HepG2 (cell line): ENCODE measurements at regions of chr16 and their contacts with region 1.

Region 1: GRCh38 chr16:14070877-14071575 is at the start of gene MRTFB:
- DNase-seq: peak; percentile 80
- ATAC-seq: peak; percentile 83
- H3K4me3 ChIP-seq: peak within 1 kb of the TSS; percentile 85 to 97 (median 93)
- H3K27ac ChIP-seq: peak within 1 kb of the TSS; percentile 71
- H3K4me1 ChIP-seq: peaks cover 44% of the 10 kb centered on the region
- H3K27me3 ChIP-seq: no peaks in the 10 kb centered on the region; a peak in 2 of 5 replicates
- CTCF ChIP-seq: 0 out of 2 replicates have a peak, but pooled peaks have one; percentile 30
- EP300 ChIP-seq: peak in 1 of 2 experiments; percentile 38; a peak in 2 of 4 replicates
- POLR2A ChIP-seq: peak; percentile 57 to 86; a peak in 2 of 4 replicates
- RAD21 ChIP-seq: no peak; the same call in 1 of the 2 replicates
- total RNA-seq, gene MRTFB: 11.4 and 17.3 TPM in 2 replicates

Region 2: DNA sequence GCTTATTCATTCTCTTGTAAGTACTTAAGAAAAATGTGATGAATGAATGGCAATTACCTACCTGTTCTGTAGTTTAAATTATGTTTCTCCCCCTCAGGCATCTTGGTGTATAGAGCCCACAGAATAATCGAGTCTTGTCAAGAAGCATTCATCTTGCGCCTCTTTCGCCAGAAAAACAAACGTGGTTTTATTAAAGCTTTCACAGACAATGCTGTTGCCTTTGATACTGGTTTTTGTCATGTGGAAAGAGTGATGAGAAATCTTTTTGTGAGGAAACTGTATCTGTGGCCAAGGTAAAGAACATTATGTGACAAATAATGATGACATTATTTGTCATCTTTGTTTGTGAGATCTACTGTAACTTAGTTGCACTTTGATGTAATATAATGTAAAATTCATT is 144.6 kb before region 1 on chr16:
- CTCF ChIA-PET with region 1: no interaction called
- POLR2A ChIA-PET with region 1: no interaction called
- in situ Hi-C with region 1: no loop called
- intact Hi-C with region 1: loop called (anchors 5 kb)
- DNase-seq: no peak
- ATAC-seq: no peak
- H3K4me3 ChIP-seq: no peak overlapping the region
- H3K27ac ChIP-seq: no peak overlapping the region
- H3K4me1 ChIP-seq: peaks cover 2% of the 10 kb centered on the region
- H3K27me3 ChIP-seq: no peaks in the 10 kb centered on the region
- CTCF ChIP-seq: no peak
- EP300 ChIP-seq: no peak
- POLR2A ChIP-seq: no peak
- RAD21 ChIP-seq: no peak

Region 3: GRCh38 chr16:14036561-14037288 is 34.3 kb before region 1 on chr16:
- CTCF ChIA-PET with region 1: no interaction called
- POLR2A ChIA-PET with region 1: no interaction called
- in situ Hi-C with region 1: no loop called
- intact Hi-C with region 1: no loop called
- DNase-seq: no peak
- ATAC-seq: no peak
- H3K4me3 ChIP-seq: no peak overlapping the region
- H3K27ac ChIP-seq: no peak overlapping the region
- H3K4me1 ChIP-seq: no peaks in the 10 kb centered on the region
- H3K27me3 ChIP-seq: no peaks in the 10 kb centered on the region
- CTCF ChIP-seq: no peak
- EP300 ChIP-seq: no peak
- POLR2A ChIP-seq: no peak
- RAD21 ChIP-seq: no peak

Region 4: GRCh38 chr16:14202697-14203096 is 131.7 kb after region 1 on chr16:
- CTCF ChIA-PET with region 1: no interaction called
- POLR2A ChIA-PET with region 1: no interaction called
- in situ Hi-C with region 1: no loop called
- intact Hi-C with region 1: loop called (anchors 10 kb)
- DNase-seq: peak; percentile 54
- ATAC-seq: peak; percentile 82
- H3K4me3 ChIP-seq: no peak overlapping the region
- H3K27ac ChIP-seq: peak overlapping the region; percentile 0
- H3K4me1 ChIP-seq: peaks cover 19% of the 10 kb centered on the region
- H3K27me3 ChIP-seq: no peaks in the 10 kb centered on the region
- CTCF ChIP-seq: no peak
- EP300 ChIP-seq: no peak
- POLR2A ChIP-seq: no peak
- RAD21 ChIP-seq: no peak

Region 5: GRCh38 chr16:14215941-14216340 is 144.9 kb after region 1 on chr16:
- CTCF ChIA-PET with region 1: no interaction called
- POLR2A ChIA-PET with region 1: no interaction called
- in situ Hi-C with region 1: no loop called
- intact Hi-C with region 1: no loop called
- DNase-seq: no peak
- ATAC-seq: no peak
- H3K4me3 ChIP-seq: no peak overlapping the region
- H3K27ac ChIP-seq: no peak overlapping the region
- H3K4me1 ChIP-seq: peaks cover 8% of the 10 kb centered on the region
- H3K27me3 ChIP-seq: no peaks in the 10 kb centered on the region
- CTCF ChIP-seq: no peak
- EP300 ChIP-seq: no peak
- POLR2A ChIP-seq: no peak
- RAD21 ChIP-seq: no peak

Region 6: DNA sequence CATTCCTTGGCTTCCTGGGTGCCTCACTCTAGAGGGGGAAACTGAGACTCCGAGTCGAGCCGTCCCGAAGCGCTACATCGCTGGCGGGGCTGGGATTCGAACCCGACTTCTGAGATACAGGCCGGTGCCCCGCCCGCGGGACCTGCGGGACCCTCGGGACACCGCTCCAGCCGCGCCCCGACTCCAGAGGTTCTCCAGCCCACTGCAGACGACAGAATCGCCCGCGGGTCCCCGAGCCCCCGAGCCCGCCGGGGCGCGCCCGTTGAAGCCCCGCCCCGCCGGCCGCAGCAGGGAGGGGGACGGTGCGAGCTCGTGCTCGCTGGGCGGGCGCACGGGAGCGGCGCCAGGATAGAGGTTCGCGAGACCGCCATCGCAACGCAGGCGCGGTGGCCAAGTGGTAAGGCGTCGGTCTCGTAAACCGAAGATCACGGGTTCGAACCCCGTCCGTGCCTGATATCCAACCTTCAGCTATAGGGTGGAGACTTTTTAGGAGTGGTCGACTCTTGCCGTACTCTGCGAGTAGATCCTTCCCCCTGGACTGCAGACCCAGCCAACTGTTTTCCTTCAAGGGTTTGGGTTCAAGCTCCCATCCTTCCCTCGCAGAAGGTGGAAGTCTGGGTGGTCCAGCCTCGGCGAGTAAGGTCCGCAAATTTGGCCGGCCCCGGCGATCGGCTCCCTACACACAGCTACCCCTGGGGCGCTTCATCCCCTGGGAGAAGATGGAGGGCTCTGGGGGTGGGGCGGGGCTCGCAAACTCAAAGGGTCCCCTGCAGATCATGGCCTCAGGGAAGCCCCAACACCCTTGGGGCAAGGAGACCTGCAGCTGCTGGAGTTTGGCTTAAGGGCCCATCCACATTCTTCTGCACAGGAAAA is 214.7 kb after region 1 on chr16:
- CTCF ChIA-PET with region 1: no interaction called
- POLR2A ChIA-PET with region 1: no interaction called
- in situ Hi-C with region 1: no loop called
- intact Hi-C with region 1: loop called (anchors 10 kb)
- DNase-seq: peak; percentile 95
- ATAC-seq: peak; percentile 84
- H3K4me3 ChIP-seq: peak overlapping the region; percentile 77 to 94 (median 89)
- H3K27ac ChIP-seq: peak overlapping the region; percentile 35
- H3K4me1 ChIP-seq: peaks cover 36% of the 10 kb centered on the region
- H3K27me3 ChIP-seq: no peaks in the 10 kb centered on the region; a peak in 1 of 5 replicates
- CTCF ChIP-seq: peak; percentile 34
- EP300 ChIP-seq: peak; percentile 30 to 67; a peak in 3 of 4 replicates
- POLR2A ChIP-seq: no peak
- RAD21 ChIP-seq: peak; percentile 79